Activated CD8-positive, alpha-beta T cell treated with anti-CD3 and anti-CD28 coated beads for 36 hours (primary cell): ENCODE measurements at regions of chr7 and their contacts with region 1.

Region 1: GRCh38 chr7:97027427-97028234 is 3.0 kb upstream of the DLX5 start:
- DNase-seq: peak; percentile 77
- ATAC-seq: peak; percentile 82
- H3K4me3 Mint-ChIP-seq: peak overlapping the region; percentile 61
- H3K27ac Mint-ChIP-seq: no peak overlapping the region
- H3K4me1 Mint-ChIP-seq: peaks cover 34% of the 10 kb centered on the region
- H3K27me3 Mint-ChIP-seq: peaks cover 68% of the 10 kb centered on the region
- CTCF ChIP-seq: peak; percentile 87

Region 2: GRCh38 chr7:95916573-95917297 is 1110.9 kb before region 1 on chr7:
- CTCF ChIA-PET with region 1: interaction called, 29 read pairs
- POLR2A ChIA-PET with region 1: no interaction called
- intact Hi-C with region 1: loop called (anchors 5 kb)
- DNase-seq: peak; percentile 86
- ATAC-seq: no peak
- H3K4me3 Mint-ChIP-seq: no peak overlapping the region
- H3K27ac Mint-ChIP-seq: no peak overlapping the region
- H3K4me1 Mint-ChIP-seq: peaks cover 2% of the 10 kb centered on the region
- H3K27me3 Mint-ChIP-seq: peaks cover 19% of the 10 kb centered on the region
- CTCF ChIP-seq: peak; percentile 78

Region 3: GRCh38 chr7:96075510-96076349 is 951.9 kb before region 1 on chr7:
- CTCF ChIA-PET with region 1: interaction called, 29 read pairs
- POLR2A ChIA-PET with region 1: no interaction called
- intact Hi-C with region 1: loop called (anchors 2 kb)
- DNase-seq: peak; percentile 61
- ATAC-seq: peak; percentile 87
- H3K4me3 Mint-ChIP-seq: peak overlapping the region; percentile 68
- H3K27ac Mint-ChIP-seq: no peak overlapping the region
- H3K4me1 Mint-ChIP-seq: peaks cover 10% of the 10 kb centered on the region
- H3K27me3 Mint-ChIP-seq: peaks cover 34% of the 10 kb centered on the region
- CTCF ChIP-seq: peak; percentile 69

Region 4: GRCh38 chr7:96414931-96415292 is 612.7 kb before region 1 on chr7:
- CTCF ChIA-PET with region 1: interaction called, 4 read pairs
- POLR2A ChIA-PET with region 1: no interaction called
- intact Hi-C with region 1: loop called (anchors 5 kb)
- DNase-seq: peak; percentile 65
- ATAC-seq: peak; percentile 62
- H3K4me3 Mint-ChIP-seq: no peak overlapping the region
- H3K27ac Mint-ChIP-seq: no peak overlapping the region
- H3K4me1 Mint-ChIP-seq: no peaks in the 10 kb centered on the region
- H3K27me3 Mint-ChIP-seq: peaks cover 7% of the 10 kb centered on the region
- CTCF ChIP-seq: peak; percentile 62

Region 5: DNA sequence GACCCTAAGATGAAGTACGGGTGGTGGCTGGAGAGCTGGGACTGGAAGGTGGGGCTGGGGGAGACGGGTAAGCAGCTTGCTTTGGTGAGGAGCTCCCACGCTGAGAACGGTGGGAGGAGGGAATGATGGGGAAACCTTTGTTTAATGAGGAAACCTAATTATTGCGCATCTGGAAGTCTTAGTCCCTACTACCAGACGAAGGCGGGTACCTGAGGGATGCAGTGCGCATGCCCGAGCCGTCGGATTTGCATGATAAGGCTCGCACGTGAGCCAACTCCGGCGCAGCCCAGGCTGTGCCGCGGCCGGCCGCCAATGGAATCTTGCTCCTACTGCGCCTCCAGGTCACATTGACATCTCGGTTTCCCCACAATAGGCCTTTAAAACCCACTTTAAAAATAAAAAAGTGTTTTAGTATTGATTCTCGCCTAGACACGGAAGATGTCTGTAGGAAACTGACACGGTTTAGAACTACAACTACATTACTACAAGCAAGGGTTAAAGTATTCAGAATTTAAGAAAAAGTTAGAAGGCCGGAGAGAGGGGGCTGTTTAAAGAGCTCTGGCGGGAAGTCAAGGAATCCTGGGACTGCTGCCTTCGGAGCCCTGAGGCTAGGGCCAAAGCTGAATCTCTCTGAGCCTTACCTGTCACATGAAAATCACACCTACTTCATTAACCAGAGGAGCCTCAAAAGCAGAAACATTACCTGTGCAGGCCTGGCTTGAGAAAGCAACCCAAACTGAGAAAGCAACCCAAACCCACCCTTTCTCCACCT is 34.4 kb before region 1 on chr7:
- CTCF ChIA-PET with region 1: interaction called, 22 read pairs
- POLR2A ChIA-PET with region 1: interaction called, 3 read pairs
- intact Hi-C with region 1: loop called (anchors 5 kb)
- DNase-seq: no peak
- ATAC-seq: no peak
- H3K4me3 Mint-ChIP-seq: no peak overlapping the region
- H3K27ac Mint-ChIP-seq: no peak overlapping the region
- H3K4me1 Mint-ChIP-seq: peaks cover 3% of the 10 kb centered on the region
- H3K27me3 Mint-ChIP-seq: peaks cover 87% of the 10 kb centered on the region
- CTCF ChIP-seq: no peak

Region 6: GRCh38 chr7:97006036-97006815 is 21.4 kb before region 1 on chr7:
- CTCF ChIA-PET with region 1: interaction called, 15 read pairs
- POLR2A ChIA-PET with region 1: interaction called, 3 read pairs
- intact Hi-C with region 1: no loop called
- DNase-seq: peak; percentile 49
- ATAC-seq: peak; percentile 68
- H3K4me3 Mint-ChIP-seq: peak overlapping the region; percentile 66
- H3K27ac Mint-ChIP-seq: no peak overlapping the region
- H3K4me1 Mint-ChIP-seq: peaks cover 17% of the 10 kb centered on the region
- H3K27me3 Mint-ChIP-seq: peaks cover 80% of the 10 kb centered on the region
- CTCF ChIP-seq: no peak

Region 7: GRCh38 chr7:97090761-97091353 is 63.2 kb after region 1 on chr7:
- CTCF ChIA-PET with region 1: no interaction called
- POLR2A ChIA-PET with region 1: no interaction called
- intact Hi-C with region 1: no loop called
- DNase-seq: peak; percentile 25
- ATAC-seq: no peak
- H3K4me3 Mint-ChIP-seq: no peak overlapping the region
- H3K27ac Mint-ChIP-seq: no peak overlapping the region
- H3K4me1 Mint-ChIP-seq: no peaks in the 10 kb centered on the region
- H3K27me3 Mint-ChIP-seq: peaks cover 19% of the 10 kb centered on the region
- CTCF ChIP-seq: no peak

Region 8: GRCh38 chr7:97155897-97156418 is 128.3 kb after region 1 on chr7:
- CTCF ChIA-PET with region 1: no interaction called
- POLR2A ChIA-PET with region 1: no interaction called
- intact Hi-C with region 1: no loop called
- DNase-seq: no peak
- ATAC-seq: no peak
- H3K4me3 Mint-ChIP-seq: no peak overlapping the region
- H3K27ac Mint-ChIP-seq: no peak overlapping the region
- H3K4me1 Mint-ChIP-seq: no peaks in the 10 kb centered on the region
- H3K27me3 Mint-ChIP-seq: no peaks in the 10 kb centered on the region
- CTCF ChIP-seq: no peak